ENCODE measurements at regions of chr15 and their contacts with region 1.

Region 1: GRCh38 chr15:62886431-62887071 is 156.0 kb upstream of the TPM1 start:
- DNase-seq: no peak
- H3K4me3 ChIP-seq: peak overlapping the region; percentile 5; the same call in 1 of the 2 replicates
- H3K27ac ChIP-seq: no peak overlapping the region
- H3K27me3 ChIP-seq: no peaks in the 10 kb centered on the region
- CTCF ChIP-seq: no peak

Region 2: DNA sequence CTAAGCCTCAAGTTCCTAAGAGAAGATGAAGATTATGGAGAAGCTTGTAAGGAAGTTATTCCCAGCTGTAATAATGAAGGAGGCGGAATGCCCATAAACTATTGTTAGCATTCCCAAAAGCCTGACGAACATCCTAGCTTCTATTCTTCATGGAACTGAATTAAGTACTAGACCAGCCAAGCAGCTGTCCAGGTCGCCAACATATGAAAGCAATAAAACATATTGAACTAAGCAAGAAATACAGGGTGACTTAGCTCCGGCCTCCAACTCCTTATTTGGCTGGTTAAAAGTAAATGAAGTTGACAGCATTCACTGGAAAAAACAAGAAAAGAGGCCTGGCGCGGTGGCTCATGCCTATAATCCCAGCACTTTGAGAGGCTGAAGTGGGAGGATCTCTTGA is 18.0 kb before region 1 on chr15:
- CTCF ChIA-PET with region 1: no interaction called
- POLR2A ChIA-PET with region 1: no interaction called
- DNase-seq: no peak
- H3K4me3 ChIP-seq: no peak overlapping the region
- H3K27ac ChIP-seq: no peak overlapping the region
- H3K27me3 ChIP-seq: no peaks in the 10 kb centered on the region
- CTCF ChIP-seq: no peak

Region 3: DNA sequence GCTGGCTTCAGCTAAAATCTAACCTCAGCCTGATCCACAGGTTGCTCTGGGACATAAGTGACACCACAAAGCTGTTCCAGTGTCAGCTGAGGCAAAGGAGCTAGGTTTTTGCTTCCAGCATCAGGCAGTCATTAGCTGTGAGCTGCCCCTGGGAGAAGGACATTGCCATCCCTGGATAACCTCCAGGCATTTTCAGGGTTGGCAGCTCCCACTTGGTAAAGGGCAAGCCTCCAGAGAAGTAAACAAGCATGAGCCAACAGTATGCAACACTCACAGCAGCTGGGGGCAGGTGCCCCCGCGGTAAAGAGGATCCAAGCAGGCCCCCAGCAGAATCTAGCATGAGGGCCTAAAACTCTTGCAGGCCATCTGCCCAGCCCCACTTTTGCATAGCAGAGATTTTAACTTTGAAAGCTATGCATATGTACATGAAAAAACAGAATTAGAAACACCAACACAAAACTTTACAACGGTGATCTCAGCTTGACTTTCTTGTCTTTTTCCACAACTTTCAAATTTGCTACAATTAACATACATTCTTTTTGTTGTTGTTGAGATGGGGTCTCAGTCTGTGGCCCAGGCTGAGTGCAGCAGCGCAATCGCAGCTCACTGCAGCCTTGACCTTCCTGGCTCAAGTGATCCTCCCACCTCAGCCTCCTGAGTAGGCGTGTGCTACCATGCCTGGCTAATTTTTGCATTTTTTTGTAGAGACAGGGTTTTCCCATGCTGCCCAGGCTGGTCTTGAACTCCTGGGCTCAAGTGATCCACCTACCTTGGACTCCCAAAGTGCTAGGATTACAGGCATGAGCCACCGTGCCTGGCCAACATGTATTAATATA is 72.2 kb after region 1 on chr15:
- CTCF ChIA-PET with region 1: no interaction called
- POLR2A ChIA-PET with region 1: no interaction called
- DNase-seq: no peak
- H3K4me3 ChIP-seq: no peak overlapping the region
- H3K27ac ChIP-seq: no peak overlapping the region
- H3K27me3 ChIP-seq: no peaks in the 10 kb centered on the region
- CTCF ChIP-seq: no peak

Region 4: DNA sequence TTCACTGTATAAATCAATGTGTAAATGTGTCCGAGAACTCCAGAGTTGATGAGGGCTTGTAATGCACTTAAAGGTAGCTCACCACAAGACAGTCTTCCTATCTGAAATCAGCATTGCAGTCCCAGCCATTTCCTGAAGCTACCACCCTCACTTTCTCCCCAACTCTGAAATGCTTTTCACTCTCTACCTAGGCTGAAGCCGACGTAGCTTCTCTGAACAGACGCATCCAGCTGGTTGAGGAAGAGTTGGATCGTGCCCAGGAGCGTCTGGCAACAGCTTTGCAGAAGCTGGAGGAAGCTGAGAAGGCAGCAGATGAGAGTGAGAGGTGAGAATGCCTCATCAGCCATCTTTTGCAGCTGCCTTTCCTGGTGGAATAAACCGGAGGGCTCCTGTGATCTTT is 170.2 kb after region 1 on chr15:
- CTCF ChIA-PET with region 1: interaction called, 10 read pairs
- POLR2A ChIA-PET with region 1: no interaction called
- DNase-seq: peak; percentile 82
- H3K4me3 ChIP-seq: no peak overlapping the region
- H3K27ac ChIP-seq: peak overlapping the region; percentile 69
- H3K27me3 ChIP-seq: no peaks in the 10 kb centered on the region
- CTCF ChIP-seq: 0 out of 2 replicates have a peak, but pooled peaks have one; percentile 1

Measured in AG04450 (cell line).